Right ventricle myocardium superior (tissue), 1 donor: ENCODE measurements at regions of chr4 and their contacts with region 1.

Region 1: GRCh38 chr4:16794816-16795445 is 103.5 kb downstream of the LDB2 start:
- DNase-seq: peak; percentile 52
- ATAC-seq: peak; percentile 39

Region 2: DNA sequence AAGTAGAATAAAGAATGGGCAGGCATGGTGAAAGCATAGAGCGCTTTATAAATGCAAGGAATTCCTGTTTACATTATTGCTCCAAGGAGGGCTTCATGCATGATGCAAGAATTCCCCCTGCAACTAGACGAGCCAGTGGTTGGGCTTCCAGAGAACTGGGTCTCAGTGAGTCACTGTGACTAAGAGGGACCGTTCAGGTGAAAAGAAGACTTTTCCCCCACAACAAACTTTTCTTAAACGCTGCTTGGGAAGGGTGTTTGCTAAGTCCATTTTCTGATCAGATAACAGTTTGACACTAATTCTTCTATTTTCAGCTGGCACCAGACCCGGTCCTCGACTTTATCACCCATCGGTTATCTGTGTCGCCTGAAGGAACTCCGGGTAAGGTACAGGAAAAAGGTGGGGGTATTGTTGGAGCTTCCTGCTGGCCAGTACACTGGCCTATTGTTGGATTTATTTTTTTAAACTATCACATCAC is 63.4 kb after region 1 on chr4:
- intact Hi-C with region 1: no loop called
- DNase-seq: no peak
- ATAC-seq: peak; percentile 60

Region 3: GRCh38 chr4:16897991-16898827 is 103.3 kb after region 1 on chr4 and contains the start of gene LDB2:
- intact Hi-C with region 1: loop called (anchors 10 kb)
- DNase-seq: peak; percentile 83
- ATAC-seq: peak; percentile 90
- total RNA-seq, gene LDB2: 18.5 TPM